ENCODE measurements at regions of chr10 and their contacts with region 1.

Region 1: DNA sequence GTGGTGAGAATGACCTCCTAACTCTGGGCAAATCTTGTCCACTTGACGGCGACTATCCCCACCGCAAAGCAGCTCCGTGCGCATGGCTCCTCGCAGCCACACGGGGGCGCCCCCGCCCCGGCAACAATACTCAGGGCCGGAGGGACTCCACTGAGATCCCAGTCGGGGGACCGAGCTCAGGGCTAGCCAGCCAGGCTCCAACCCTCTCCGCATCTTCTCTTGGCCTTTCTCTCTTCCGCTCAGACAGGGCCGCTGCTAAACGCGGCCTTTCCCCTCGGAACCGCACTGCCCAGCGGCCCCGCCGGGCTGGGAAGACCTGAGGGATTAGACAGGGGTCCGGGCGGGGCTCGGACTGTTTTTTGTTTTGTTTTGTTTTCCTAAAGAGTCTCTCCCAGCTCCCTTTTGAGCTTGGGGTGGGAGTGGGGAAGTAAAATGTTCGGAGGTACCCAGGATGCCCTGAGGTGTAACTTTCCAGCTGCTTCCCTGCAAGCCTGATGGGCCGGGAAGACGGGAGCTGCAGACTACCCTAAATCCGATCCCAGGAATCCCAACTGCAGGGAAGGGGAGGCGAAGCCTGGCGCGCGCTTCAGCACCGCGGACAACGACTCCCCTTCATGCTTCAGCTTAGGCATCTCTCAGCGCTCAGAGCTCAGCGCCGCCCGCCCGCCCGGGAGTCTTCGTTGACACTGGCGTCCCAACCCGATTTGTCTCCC is 2.7 kb downstream of the KCNIP2 start:
- DNase-seq: peak; percentile 71
- H3K4me3 Mint-ChIP-seq: peak overlapping the region; percentile 85
- H3K27ac Mint-ChIP-seq: peak overlapping the region; percentile 77
- H3K4me1 Mint-ChIP-seq: peaks cover 55% of the 10 kb centered on the region
- H3K27me3 Mint-ChIP-seq: peaks cover 18% of the 10 kb centered on the region

Region 2: DNA sequence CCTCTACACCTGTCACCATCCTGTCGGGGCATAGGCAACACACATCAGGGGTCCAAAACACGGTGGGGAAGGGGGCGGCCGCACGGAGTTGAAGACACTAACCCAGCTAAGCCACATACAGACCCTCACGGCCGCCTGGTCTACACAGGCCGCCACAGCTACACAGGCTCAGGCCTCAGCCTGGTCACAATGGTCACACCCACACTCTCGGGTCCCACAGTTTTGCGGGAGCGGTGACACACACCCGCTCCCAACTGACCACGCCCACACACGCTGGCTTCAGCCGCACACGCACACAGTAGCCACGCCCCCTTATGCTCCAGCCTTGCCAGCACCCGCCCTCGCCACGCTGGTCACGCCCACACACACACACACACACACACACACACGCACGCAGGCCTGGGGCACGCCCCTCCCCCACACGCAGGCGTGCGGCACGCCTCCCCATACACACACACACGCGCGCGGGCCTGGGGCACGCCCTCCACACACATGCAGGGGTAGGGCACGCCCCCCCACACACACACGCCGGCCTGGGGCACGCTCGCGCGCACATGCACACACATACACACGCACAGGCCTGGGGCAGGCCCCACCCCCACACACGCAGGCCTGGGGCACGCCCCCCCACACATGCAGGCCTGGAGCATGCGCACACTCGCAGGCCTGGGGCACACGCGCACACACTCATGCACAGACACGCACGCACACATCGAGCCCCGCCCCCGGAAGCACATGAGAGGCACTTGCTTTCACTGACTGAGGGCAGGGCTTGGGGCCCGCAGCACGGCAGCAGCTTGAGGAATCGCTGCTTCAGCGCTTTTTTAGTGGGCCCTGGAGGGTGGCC is 10.4 kb before region 1 on chr10:
- intact Hi-C with region 1: loop called (anchors 1 kb)
- DNase-seq: peak; percentile 85
- H3K4me3 Mint-ChIP-seq: peak overlapping the region; percentile 79
- H3K27ac Mint-ChIP-seq: peak overlapping the region; percentile 94
- H3K4me1 Mint-ChIP-seq: peaks cover 51% of the 10 kb centered on the region
- H3K27me3 Mint-ChIP-seq: no peaks in the 10 kb centered on the region

Region 3: GRCh38 chr10:101889256-101890210 is 48.6 kb after region 1 on chr10:
- intact Hi-C with region 1: loop called (anchors 1 kb)
- DNase-seq: peak; percentile 52
- H3K4me3 Mint-ChIP-seq: no peak overlapping the region
- H3K27ac Mint-ChIP-seq: no peak overlapping the region
- H3K4me1 Mint-ChIP-seq: peaks cover 9% of the 10 kb centered on the region
- H3K27me3 Mint-ChIP-seq: no peaks in the 10 kb centered on the region

Region 4: DNA sequence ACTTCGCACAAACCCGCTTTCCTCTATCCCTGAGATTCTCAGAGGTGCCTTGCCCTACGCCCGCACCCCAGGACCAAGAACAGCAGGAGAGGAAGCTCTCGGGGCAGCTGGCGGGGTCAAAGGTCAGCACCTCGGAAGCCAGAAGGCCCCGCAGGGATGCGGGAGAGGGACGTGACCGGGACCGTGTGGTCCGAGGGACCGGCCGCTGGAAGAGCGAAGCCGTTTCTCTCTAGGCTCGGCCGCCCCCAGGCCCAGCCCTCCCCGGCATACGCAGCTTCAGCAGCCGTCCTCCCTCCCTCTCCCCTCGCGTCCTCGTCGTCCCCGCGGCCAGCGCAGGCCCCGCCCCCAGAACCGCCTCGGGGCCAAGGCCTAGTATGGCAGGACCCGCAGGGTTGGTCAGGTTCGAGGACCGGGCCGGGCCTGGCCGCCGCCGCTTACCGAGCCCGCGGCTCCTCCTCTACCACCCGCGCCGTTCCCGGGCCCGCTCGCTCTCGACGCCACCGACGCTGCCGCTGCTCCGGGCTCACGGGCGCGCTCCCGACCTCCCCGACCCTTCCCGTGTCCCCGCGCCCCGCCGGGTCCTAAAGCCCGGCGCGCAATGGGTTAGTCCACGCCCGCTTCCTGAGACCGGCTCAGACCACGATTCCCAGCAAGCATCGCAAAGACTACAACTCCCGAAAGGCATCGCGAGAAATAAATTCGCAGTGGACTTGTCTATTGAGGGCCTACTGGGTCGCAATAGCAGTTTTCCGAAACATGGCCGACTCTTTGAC is 214.9 kb after region 1 on chr10 and contains the start of gene ARMH3:
- intact Hi-C with region 1: loop called (anchors 1 kb)
- DNase-seq: peak; percentile 90
- H3K4me3 Mint-ChIP-seq: peak within 1 kb of the TSS; percentile 89
- H3K27ac Mint-ChIP-seq: peak within 1 kb of the TSS; percentile 94
- H3K4me1 Mint-ChIP-seq: peaks cover 31% of the 10 kb centered on the region
- H3K27me3 Mint-ChIP-seq: no peaks in the 10 kb centered on the region
- total RNA-seq, gene ARMH3: 21.5 and 24.8 TPM in 2 replicates

Region 5: GRCh38 chr10:102072673-102073527 is 232.0 kb after region 1 on chr10:
- intact Hi-C with region 1: loop called (anchors 1 kb)
- DNase-seq: peak; percentile 67
- H3K4me3 Mint-ChIP-seq: no peak overlapping the region
- H3K27ac Mint-ChIP-seq: no peak overlapping the region
- H3K4me1 Mint-ChIP-seq: peaks cover 6% of the 10 kb centered on the region
- H3K27me3 Mint-ChIP-seq: no peaks in the 10 kb centered on the region

Measured in activated T-helper 1 cell treated with anti-CD3 and anti-CD28 coated beads, Interleukin-12 subunit alpha, Interleukin-12 subunit beta, Interleukin-2, Interleukin-4 antibody, amounts not matched to agents 30 ng/mL and 10 ng/mL and 1 ng/mL, durations not matched to agents 14 hours and 24 hours and 36 hours (primary cell).